ENCODE measurements at regions of chr5 and their contacts with region 1.

Region 1: DNA sequence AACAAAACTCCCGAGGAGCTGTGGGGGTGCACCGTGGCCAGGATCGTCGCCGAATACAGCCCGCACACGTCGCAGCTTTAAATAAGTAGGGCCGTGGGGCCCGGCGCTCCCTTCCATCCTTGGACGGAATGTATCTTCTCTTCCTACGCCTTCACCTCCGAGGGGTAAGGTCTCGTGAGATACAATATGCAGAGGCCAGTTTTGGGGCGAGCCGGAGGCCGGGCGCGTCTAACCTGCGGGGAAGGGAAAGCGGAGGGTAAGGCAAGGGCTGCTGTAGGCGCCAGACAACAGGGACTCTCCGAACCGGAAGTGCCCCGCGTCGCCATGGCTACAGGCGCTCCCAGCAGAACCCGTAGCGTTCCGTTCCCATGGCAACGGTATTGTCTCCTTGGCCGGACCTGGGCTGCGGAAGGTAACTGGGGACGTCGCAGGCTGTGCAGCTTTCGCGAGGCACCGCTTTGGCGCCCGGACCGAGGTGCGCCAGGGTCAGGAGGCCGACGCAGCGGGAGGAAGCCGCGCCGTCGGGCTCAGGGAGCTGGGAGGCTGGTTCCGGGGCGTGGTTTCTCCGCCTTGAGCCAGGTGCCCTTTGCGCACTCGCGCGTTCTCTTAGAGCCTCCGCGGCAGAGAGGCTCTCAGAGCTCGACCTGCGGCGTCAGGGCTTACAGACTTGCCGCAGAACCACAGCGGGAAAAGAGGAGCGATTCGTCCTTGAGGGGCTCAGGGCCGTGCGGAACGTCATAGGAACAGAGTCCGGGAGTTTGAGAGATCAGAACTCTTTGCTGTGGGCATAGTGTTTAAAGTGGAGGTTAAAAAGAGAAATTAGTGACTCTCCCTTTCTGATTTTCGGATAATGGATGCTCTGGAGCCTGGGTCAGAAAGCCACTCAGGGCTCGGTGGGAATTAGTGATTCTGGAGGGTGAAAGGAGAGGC is at the start of gene TTC23L:
- DNase-seq: peak; percentile 78
- H3K4me3 ChIP-seq: peak within 1 kb of the TSS; percentile 18 to 61 (median 42)
- H3K27ac ChIP-seq: no peak within 1 kb of the TSS
- H3K4me1 ChIP-seq: no peaks in the 10 kb centered on the region
- H3K27me3 ChIP-seq: no peaks in the 10 kb centered on the region
- CTCF ChIP-seq: no peak
- POLR2A ChIP-seq: no peak
- total RNA-seq, gene TTC23L: 0.25 TPM in 1 of 2 replicates, not detected in the other

Region 2: GRCh38 chr5:34863946-34864345 is 24.9 kb after region 1 on chr5:
- CTCF ChIA-PET with region 1: interaction called, 3 read pairs
- POLR2A ChIA-PET with region 1: no interaction called
- dilution Hi-C with region 1: no loop called
- intact Hi-C with region 1: loop called (anchors 2 kb)
- DNase-seq: peak; percentile 72
- H3K4me3 ChIP-seq: no peak overlapping the region
- H3K27ac ChIP-seq: no peak overlapping the region
- H3K4me1 ChIP-seq: peaks cover 22% of the 10 kb centered on the region
- H3K27me3 ChIP-seq: no peaks in the 10 kb centered on the region
- CTCF ChIP-seq: no peak
- POLR2A ChIP-seq: no peak

Region 3: DNA sequence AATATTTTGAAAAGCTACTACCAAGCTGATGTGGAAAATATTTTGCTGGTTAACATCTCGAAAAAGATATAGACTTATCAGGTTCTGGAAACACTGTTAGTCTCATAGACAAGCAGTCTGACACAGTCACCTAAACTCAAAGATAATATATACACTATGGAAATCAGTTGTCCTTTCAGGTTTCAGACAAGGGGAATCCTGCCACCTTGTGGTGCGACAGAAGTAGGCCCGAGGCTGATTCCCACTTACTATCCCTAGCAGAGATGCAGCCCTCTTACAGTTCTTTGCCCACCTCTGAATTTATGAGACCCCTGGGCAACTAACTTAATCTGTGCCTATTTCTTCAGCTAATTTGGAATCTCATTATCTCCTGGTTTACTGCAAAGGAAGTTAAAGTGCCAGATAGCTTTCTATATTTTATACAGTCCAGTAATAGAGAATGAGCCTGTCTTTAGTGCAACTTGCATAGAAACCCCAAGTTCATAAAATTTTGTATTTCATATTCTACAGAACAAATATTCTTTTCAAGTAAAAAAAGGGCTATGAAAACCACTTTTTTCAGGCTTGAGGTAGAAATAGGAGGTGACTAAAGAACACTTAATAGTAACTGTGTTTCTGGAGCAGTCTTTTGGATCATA is 59.3 kb after region 1 on chr5:
- CTCF ChIA-PET with region 1: interaction called, 13 read pairs
- POLR2A ChIA-PET with region 1: no interaction called
- dilution Hi-C with region 1: no loop called
- intact Hi-C with region 1: loop called (anchors 1 kb)
- DNase-seq: peak; percentile 74
- H3K4me3 ChIP-seq: no peak overlapping the region
- H3K27ac ChIP-seq: no peak overlapping the region
- H3K4me1 ChIP-seq: no peaks in the 10 kb centered on the region
- H3K27me3 ChIP-seq: no peaks in the 10 kb centered on the region
- CTCF ChIP-seq: peak; percentile 83 to 84
- POLR2A ChIP-seq: no peak

Measured in endothelial cell of umbilical vein (primary cell).